Activated T-helper 1 cell treated with anti-CD3 and anti-CD28 coated beads, Interleukin-12 subunit alpha, Interleukin-12 subunit beta, Interleukin-2, Interleukin-4 antibody, amounts not matched to agents 30 ng/mL and 10 ng/mL and 1 ng/mL, durations not matched to agents 14 hours and 24 hours and 36 hours (primary cell): ENCODE measurements at regions of chr5 and their contacts with region 1.

Region 1: GRCh38 chr5:163437309-163438182 is at the start of gene CCNG1:
- DNase-seq: peak; percentile 87
- H3K4me3 Mint-ChIP-seq: peak within 1 kb of the TSS; percentile 92
- H3K27ac Mint-ChIP-seq: peak within 1 kb of the TSS; percentile 75
- H3K4me1 Mint-ChIP-seq: peaks cover 59% of the 10 kb centered on the region
- H3K27me3 Mint-ChIP-seq: peaks cover 6% of the 10 kb centered on the region
- total RNA-seq, gene CCNG1: 72.3 and 77.8 TPM in 2 replicates

Region 2: DNA sequence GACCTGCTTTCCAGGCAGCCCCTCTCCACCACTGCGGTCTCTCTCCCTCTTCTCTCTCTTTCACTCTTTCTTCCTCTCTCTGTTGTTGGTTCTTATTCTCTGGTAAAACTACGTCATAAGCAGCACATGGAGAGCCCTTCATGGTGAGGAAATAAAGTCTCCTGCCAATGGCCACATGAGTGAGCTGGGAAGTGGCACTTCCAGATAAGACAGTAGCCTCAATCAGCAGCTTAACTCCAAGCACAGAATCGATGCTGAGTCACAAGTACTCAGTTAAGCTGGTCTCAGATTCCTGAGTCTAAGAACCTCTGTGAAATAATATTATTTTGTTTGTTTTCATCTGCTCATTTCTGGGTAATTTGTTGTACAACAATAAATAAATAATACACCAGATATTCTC is 869.9 kb before region 1 on chr5:
- intact Hi-C with region 1: no loop called
- DNase-seq: no peak
- H3K4me3 Mint-ChIP-seq: no peak overlapping the region
- H3K27ac Mint-ChIP-seq: no peak overlapping the region
- H3K4me1 Mint-ChIP-seq: no peaks in the 10 kb centered on the region
- H3K27me3 Mint-ChIP-seq: no peaks in the 10 kb centered on the region

Region 3: DNA sequence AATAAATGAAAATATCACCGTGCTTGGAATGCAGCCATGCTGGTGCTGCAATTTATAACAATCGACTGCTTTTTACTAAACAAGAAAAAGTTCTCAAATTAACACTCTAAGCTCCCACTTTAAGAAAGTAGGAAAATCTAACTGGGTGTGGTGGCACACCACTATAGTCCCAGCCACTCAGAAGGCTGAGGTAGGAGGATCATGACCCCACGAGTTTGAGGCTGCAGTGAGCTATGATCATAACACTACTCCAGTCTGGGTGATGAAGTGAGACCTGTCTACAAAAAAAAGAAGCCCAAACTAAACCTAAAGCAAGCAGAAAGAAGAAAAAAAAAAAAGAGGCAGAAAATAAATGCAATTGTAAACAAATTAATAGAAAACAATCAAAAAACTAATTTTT is 10.3 kb after region 1 on chr5:
- intact Hi-C with region 1: loop called (anchors 1 kb)
- DNase-seq: no peak
- H3K4me3 Mint-ChIP-seq: no peak overlapping the region
- H3K27ac Mint-ChIP-seq: no peak overlapping the region
- H3K4me1 Mint-ChIP-seq: peaks cover 11% of the 10 kb centered on the region
- H3K27me3 Mint-ChIP-seq: no peaks in the 10 kb centered on the region